ENCODE measurements at regions of chr2 and their contacts with region 1.

Region 1: DNA sequence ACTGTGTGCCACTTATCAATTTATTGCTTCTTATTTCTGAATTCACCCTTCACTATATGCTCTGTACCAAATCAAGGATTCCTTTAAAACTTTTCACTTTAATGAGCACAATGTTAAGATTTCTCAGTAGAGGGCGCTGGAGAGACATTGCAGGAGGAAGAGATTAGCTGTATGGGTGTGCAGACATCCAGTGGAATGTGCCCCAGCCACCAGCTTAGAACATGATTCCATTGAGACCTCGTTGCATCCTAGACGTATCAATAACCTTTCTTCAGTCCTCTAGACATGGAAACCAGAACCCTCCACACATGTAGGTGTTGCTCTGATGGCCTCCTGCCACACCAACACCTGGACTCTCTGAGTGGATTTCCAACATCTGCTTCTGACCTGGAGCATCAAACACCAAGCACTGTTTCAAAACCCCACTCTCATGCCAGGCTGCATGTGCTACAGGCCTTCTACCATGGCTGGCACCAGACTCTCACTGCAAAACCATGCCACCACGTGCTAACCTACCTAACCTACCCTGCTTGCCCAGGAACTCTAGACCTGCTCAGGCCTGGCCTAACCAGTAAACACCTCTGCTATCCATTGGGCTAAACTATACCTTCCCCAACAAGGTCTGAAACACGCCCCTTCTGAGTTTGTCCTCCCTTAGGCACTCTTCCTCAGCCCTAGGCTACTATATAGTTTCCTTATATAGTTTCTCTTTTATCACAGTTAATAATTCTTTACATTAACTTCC is 633.2 kb upstream of the PKDCC start:
- DNase-seq: no peak
- H3K4me3 ChIP-seq: no peak overlapping the region
- H3K27ac ChIP-seq: peak overlapping the region; percentile 41
- H3K4me1 ChIP-seq: peaks cover under 1% of the 10 kb centered on the region
- H3K27me3 ChIP-seq: no peaks in the 10 kb centered on the region
- CTCF ChIP-seq: peak; percentile 67

Region 2: GRCh38 chr2:41698678-41699422 is 284.2 kb after region 1 on chr2:
- intact Hi-C with region 1: loop called (anchors 5 kb)
- DNase-seq: peak; percentile 46
- H3K4me3 ChIP-seq: peak overlapping the region; percentile 50
- H3K27ac ChIP-seq: no peak overlapping the region
- H3K4me1 ChIP-seq: peaks cover 12% of the 10 kb centered on the region
- H3K27me3 ChIP-seq: no peaks in the 10 kb centered on the region
- CTCF ChIP-seq: peak; percentile 88

Region 3: GRCh38 chr2:41782306-41783158 is 367.9 kb after region 1 on chr2:
- intact Hi-C with region 1: loop called (anchors 10 kb)
- DNase-seq: no peak
- H3K4me3 ChIP-seq: no peak overlapping the region
- H3K27ac ChIP-seq: no peak overlapping the region
- H3K4me1 ChIP-seq: no peaks in the 10 kb centered on the region
- H3K27me3 ChIP-seq: peaks cover 5% of the 10 kb centered on the region
- CTCF ChIP-seq: peak; percentile 85